Naive thymus-derived CD8-positive, alpha-beta T cell (primary cell): ENCODE measurements at regions of chr14 and their contacts with region 1.

Region 1: GRCh38 chr14:35404449-35405303 is at the start of gene NFKBIA:
- DNase-seq: peak; percentile 88 to 96 (median 92)
- ATAC-seq: peak; percentile 62 to 65
- H3K4me3 Mint-ChIP-seq: peak within 1 kb of the TSS; percentile 91 to 98 (median 94)
- H3K27ac Mint-ChIP-seq: peak within 1 kb of the TSS; percentile 95 to 100 (median 99)
- H3K4me1 Mint-ChIP-seq: peaks cover 32 to 64% (median 57%) of the 10 kb centered on the region in 4 donors
- H3K27me3 Mint-ChIP-seq: no peaks in the 10 kb centered on the region
- polyA plus RNA-seq, gene NFKBIA: 194 to 328 (median 198) TPM

Region 2: GRCh38 chr14:35046048-35046741 is 358.5 kb before region 1 on chr14 and contains the start of gene FAM177A1:
- POLR2A ChIA-PET with region 1: interaction called, 20 read pairs
- DNase-seq: peak; percentile 93 to 100 (median 99)
- ATAC-seq: peak; percentile 81 to 89
- H3K4me3 Mint-ChIP-seq: peak within 1 kb of the TSS; percentile 83 to 98 (median 96)
- H3K27ac Mint-ChIP-seq: peak within 1 kb of the TSS; percentile 98 to 100 (median 99)
- H3K4me1 Mint-ChIP-seq: peaks cover 5 to 33% (median 30%) of the 10 kb centered on the region in 4 donors
- H3K27me3 Mint-ChIP-seq: no peaks in the 10 kb centered on the region
- polyA plus RNA-seq, gene FAM177A1: 32.6 to 59.8 (median 41.0) TPM

Region 3: GRCh38 chr14:35229495-35230089 is 175.1 kb before region 1 on chr14:
- POLR2A ChIA-PET with region 1: interaction called, 22 read pairs
- DNase-seq: peak in 3 of 10 donors; percentile 30 to 48 (median 36)
- ATAC-seq: peak; percentile 52 to 53
- H3K4me3 Mint-ChIP-seq: no peak overlapping the region
- H3K27ac Mint-ChIP-seq: peak overlapping the region in 2 of 10 donors; percentile 6 to 63
- H3K4me1 Mint-ChIP-seq: peaks cover 14 to 27% (median 20%) of the 10 kb centered on the region in 4 donors
- H3K27me3 Mint-ChIP-seq: no peaks in the 10 kb centered on the region

Region 4: GRCh38 chr14:35301735-35302528 is 102.7 kb before region 1 on chr14:
- POLR2A ChIA-PET with region 1: interaction called, 30 read pairs
- DNase-seq: peak in 1 of 10 donors; percentile 10
- ATAC-seq: peak; percentile 52 to 75
- H3K4me3 Mint-ChIP-seq: peak overlapping the region; percentile 19 to 76 (median 60)
- H3K27ac Mint-ChIP-seq: peak overlapping the region; percentile 59 to 95 (median 86)
- H3K4me1 Mint-ChIP-seq: peaks cover 35 to 72% (median 62%) of the 10 kb centered on the region in 4 donors
- H3K27me3 Mint-ChIP-seq: no peaks in the 10 kb centered on the region

Region 5: GRCh38 chr14:35341446-35342159 is 63.1 kb before region 1 on chr14:
- POLR2A ChIA-PET with region 1: interaction called, 57 read pairs
- DNase-seq: peak; percentile 29 to 88 (median 56)
- ATAC-seq: peak; percentile 99
- H3K4me3 Mint-ChIP-seq: peak overlapping the region in 7 of 10 donors; percentile 36 to 79 (median 66)
- H3K27ac Mint-ChIP-seq: peak overlapping the region in 8 of 10 donors; percentile 13 to 91 (median 74)
- H3K4me1 Mint-ChIP-seq: peaks cover 14 to 49% (median 38%) of the 10 kb centered on the region in 4 donors
- H3K27me3 Mint-ChIP-seq: no peaks in the 10 kb centered on the region

Region 6: DNA sequence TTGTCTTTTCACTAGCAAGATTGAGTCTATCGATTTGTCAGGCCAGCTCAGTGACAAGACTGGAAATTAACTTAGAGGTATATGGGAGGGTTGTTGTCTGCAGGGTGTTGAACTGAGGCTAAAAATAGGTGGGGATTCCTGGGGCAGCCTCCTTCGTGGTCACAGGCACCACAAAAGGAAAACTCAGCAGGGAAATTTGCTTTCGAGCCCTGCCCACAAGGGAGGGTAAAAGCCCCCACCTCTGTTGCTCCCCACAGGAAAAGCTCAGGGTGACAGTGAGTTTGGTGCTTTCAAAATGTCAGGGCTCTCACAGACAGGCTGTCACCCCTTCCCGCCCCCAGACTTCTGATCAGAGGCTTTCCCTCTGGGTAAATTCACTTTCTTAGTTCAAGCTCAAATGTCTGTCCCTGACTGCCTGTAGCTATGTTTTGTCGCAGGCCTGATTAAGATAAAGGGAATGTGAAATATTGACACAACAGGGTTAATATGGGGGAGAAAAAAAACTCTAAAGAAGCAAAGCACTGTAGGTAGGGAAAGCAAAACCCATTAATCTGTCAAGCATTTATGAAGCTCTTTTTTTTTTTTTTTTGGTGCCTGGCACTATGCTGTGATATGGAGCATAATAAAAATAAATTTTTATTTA is 11.6 kb after region 1 on chr14:
- POLR2A ChIA-PET with region 1: interaction called, 65 read pairs
- DNase-seq: peak in 8 of 10 donors; percentile 15 to 73 (median 37)
- ATAC-seq: peak; percentile 58 to 70
- H3K4me3 Mint-ChIP-seq: peak overlapping the region; percentile 36 to 80 (median 72)
- H3K27ac Mint-ChIP-seq: peak overlapping the region; percentile 85 to 97 (median 94)
- H3K4me1 Mint-ChIP-seq: peaks cover 32 to 47% (median 42%) of the 10 kb centered on the region in 4 donors
- H3K27me3 Mint-ChIP-seq: no peaks in the 10 kb centered on the region

Region 7: DNA sequence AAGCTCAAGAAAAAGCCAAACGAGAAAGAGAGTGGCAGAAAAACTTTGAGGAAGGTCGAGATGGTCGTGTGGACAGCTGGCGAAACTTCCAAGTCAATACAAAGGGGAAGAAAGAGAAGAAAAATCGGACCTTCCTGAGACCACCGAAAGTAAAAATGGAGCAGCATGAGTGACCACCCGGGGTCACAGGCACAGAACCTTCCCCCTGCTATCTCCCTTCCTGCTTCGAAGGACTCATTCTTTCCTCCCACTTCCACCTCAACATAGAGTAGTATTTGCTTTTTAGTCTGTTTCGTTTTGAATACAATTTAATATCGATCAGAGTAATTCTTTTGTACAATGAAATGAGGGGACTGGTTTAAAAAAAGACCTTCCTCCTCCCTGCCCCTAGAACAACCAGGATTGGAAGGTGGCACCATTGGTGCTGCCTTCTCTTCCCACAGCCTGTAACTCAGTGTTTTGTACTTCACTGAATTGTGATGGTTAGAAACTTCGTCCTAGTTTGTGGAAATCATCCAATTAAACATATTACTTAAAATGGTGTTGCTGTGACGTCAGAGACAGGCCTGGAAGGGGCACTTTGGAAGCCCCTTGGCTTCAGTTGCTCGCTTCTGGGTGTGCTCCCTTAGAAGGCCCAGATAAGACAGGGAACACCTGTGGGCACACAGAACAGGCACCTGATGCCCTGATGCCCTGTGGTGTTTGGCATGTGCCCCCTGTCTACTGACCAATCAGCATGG is 26.0 kb after region 1 on chr14:
- POLR2A ChIA-PET with region 1: no interaction called
- DNase-seq: no peak
- ATAC-seq: no peak
- H3K4me3 Mint-ChIP-seq: no peak overlapping the region
- H3K27ac Mint-ChIP-seq: peak overlapping the region in 1 of 10 donors; percentile 53
- H3K4me1 Mint-ChIP-seq: peaks cover 0 to 4% (median under 1%) of the 10 kb centered on the region in 4 donors
- H3K27me3 Mint-ChIP-seq: no peaks in the 10 kb centered on the region